ENCODE measurements at regions of chr11 and their contacts with region 1.

Region 1: GRCh38 chr11:17132654-17133053 is 55.2 kb upstream of the RPS13 start:
- DNase-seq: no peak
- ATAC-seq: no peak

Region 2: DNA sequence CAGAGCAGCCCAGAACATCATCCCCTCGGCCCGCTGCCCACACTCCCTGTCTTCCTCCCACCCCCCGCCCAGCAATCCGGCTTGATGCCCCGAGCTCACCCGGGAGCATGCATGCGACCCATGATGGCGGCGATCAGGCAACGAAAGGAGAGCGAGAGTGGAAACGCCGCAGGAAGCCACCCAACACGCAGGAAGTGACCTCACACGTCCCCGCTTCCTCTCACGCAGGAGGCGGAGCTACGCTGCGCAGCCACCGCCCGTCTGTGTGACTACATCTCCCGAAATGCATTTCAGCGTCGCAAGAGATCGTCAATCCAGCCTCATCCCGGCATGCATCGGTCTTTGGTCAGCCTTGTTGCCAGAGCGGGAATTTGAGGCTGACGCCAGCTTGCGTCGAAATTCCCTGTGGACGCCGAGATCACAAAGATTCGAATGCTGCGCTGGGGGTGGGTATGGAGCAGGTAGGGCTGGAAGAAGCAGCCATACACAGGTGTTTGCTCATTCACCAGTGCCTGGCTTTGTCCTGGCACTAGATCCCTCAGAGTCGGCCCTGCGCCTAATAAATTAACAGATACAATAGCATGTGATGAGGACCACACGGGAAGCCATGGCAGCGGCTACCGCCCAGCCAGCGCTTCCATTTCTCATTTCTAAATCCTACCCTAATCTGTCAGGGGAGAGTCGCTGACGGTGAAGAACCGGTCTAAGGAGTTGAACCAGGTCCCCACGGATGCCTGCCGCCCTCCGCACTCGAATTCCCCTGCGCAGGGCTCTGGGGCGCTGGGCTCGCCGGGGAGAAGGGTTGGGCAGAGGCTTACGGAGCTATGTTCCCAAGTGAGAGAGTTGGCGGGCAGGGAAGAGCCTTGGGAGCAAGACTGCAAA is 54.9 kb before region 1 on chr11 and contains the start of gene RPS13:
- intact Hi-C with region 1: loop called (anchors 10 kb)
- DNase-seq: peak; percentile 97
- ATAC-seq: peak; percentile 99
- total RNA-seq, gene RPS13: 789 TPM

Region 3: GRCh38 chr11:17294033-17294432 is 161.4 kb after region 1 on chr11:
- intact Hi-C with region 1: no loop called
- DNase-seq: no peak
- ATAC-seq: no peak